ENCODE measurements at regions of chr3 and their contacts with region 1.

Region 1: DNA sequence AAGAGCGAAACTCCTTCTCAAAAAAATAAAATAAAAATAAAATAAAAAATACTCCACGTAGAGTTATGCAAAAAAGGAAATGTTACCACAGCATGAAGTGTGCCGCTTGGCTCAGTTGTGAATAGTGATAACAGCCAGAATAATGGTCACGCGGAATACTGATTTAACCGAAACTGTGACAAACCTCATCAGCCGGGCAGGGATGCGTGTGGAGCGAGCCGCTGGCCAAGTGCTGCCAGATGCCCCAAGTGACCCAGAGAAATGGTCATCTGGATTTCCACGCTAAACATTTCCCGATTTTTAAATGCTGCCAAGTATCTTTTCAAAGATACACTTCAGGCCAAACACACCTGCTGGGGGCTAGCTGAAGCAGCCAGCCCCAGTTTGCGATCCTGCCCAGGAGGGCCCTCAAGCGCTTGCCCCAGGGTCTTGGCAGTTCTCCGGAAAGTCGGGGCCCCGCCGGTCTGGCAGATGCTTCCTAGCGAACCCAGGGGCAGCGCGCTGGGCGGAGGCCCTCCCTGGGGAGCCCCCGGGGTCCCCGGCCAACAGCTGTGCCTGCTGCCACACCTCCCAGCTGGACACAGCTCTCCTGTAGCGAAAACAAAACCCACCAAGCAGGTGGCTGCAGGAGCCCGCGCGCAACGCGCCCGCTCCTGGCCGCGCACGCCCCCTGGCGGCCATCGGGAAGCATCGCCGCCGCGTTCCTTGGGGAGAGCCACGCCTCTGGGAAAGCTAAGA is 35.1 kb downstream of the CMTM6 start:
- DNase-seq: peak in 1 of 2 donors; percentile 38
- ATAC-seq: peak; percentile 88
- H3K4me3 ChIP-seq: peak overlapping the region; percentile 49 to 65 (median 56)
- H3K27ac ChIP-seq: peak overlapping the region in 1 of 4 donors; percentile 15
- H3K4me1 ChIP-seq: peaks cover 0 to 9% of the 10 kb centered on the region in 2 donors
- H3K27me3 ChIP-seq: no peaks in the 10 kb centered on the region
- CTCF ChIP-seq: peak; percentile 91 to 100 (median 96)
- POLR2A ChIP-seq: no peak

Region 2: DNA sequence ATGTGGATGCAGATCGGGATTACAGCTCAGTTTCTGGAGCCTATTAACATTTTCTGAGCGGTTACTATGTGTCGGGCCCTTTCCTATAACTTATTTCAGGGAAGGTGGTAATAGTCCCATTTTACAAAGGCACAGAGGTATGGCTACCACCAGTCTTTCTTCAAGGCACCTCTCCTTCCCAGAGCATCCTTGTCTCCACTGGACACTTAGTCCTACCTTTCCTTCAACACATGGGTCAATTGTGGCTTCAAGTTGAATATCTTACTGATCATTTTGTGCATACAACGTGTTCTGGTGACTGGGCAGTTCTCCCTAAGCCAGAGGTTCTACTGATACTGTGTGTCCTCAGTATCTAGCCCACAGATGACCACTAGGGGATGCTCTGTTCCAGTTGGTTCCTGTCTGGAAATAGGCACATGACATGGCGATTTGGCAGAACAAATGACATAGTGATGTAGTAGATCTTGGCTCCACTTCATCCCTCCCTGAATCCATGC is 289.8 kb before region 1 on chr3:
- in situ Hi-C with region 1: no loop called
- intact Hi-C with region 1: loop called (anchors 10 kb)
- DNase-seq: peak; percentile 18 to 31
- ATAC-seq: peak; percentile 69 to 75
- H3K4me3 ChIP-seq: no peak overlapping the region
- H3K27ac ChIP-seq: no peak overlapping the region
- H3K4me1 ChIP-seq: no peaks in the 10 kb centered on the region
- H3K27me3 ChIP-seq: no peaks in the 10 kb centered on the region
- CTCF ChIP-seq: peak; percentile 54 to 66 (median 61)
- POLR2A ChIP-seq: no peak

Region 3: DNA sequence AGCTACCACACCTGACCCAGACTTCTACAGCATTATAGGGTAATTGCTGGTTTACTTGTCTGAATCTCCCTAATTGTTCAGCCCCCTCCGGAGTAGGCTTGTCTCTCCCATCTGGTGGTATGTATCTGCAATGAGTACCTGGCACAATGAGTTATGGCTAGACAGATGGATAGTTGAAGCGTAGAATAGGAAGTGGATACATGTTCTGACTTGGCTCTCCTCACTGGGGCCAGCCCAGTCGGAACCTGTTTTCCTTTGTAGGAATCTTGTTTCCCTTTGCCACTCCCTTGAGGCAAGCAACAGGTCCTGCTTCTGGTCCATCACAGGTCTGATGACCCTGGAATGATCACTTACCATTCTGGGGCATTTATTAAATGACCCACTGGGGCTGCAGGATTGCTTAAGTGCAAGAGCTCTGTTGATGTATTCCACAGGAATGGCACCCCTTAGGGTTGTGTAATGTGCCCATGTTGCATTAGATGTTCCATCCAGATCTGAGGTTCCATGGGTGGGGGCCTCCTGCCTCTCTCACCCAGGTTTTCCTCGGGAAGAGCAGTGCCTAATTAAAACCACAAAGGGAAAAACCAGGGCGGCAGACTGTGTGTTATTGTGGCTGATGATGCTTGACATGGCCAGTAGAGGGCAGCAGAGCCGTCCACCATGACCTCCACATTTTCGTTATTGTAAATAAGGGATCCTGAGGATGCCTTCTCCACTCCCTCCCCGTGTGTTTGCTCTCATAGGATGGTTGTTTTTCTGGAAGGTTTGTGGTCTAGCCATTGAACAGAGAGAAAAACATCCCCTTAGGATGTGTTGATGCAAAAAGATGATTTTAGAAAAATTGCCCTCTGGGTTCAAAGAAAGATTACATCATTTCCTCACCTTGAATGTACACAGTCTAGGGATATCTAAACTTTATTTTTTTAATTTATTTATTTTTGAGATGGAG is 171.0 kb before region 1 on chr3:
- in situ Hi-C with region 1: loop called (anchors 10 kb)
- intact Hi-C with region 1: loop called (anchors 5 kb)
- DNase-seq: peak; percentile 19 to 28
- ATAC-seq: peak; percentile 51 to 63
- H3K4me3 ChIP-seq: no peak overlapping the region
- H3K27ac ChIP-seq: no peak overlapping the region
- H3K4me1 ChIP-seq: no peaks in the 10 kb centered on the region
- H3K27me3 ChIP-seq: no peaks in the 10 kb centered on the region
- CTCF ChIP-seq: peak; percentile 61 to 90 (median 75)
- POLR2A ChIP-seq: no peak

Region 4: DNA sequence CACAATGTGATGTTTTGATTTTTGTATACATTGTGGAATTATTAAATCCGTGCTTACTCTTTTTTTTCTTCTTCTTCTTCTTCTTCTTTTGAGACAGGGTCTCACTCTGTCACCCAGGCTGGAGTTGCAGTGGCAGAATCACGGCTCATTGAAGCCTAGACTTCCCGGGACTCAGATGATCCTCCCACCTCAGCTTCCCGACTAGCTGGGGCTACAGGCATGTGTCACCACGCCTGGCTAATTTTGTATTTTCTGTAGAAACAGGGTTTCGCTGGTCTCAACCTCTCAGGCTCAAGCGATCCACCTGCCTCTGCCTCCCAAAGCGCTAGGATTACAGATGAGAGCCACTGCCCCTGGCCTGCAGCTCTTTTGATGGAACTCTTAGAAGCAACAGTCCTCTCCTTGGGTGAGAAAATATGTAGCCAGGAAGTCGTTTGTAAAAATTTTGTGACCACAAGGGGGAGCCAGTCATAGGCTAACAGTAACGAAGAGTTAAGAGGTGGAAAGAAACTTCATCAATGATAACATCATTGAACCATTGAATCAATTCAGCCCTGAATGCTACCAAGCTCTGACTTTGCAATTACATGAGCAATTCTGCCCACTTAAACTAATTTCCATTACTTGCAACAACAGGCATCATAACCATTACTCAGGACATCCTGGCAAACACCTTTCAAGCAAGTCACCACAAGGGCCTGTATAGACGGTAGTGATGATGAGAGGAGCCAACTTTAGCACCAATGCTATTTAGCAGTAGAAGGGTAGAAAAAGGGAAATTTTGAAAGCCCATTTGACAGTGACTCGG is 92.5 kb before region 1 on chr3:
- in situ Hi-C with region 1: loop called (anchors 5 to 10 kb)
- intact Hi-C with region 1: loop called (anchors 1 kb)
- DNase-seq: peak; percentile 6 to 18
- ATAC-seq: peak; percentile 36 to 49
- H3K4me3 ChIP-seq: no peak overlapping the region
- H3K27ac ChIP-seq: no peak overlapping the region
- H3K4me1 ChIP-seq: no peaks in the 10 kb centered on the region
- H3K27me3 ChIP-seq: no peaks in the 10 kb centered on the region
- CTCF ChIP-seq: peak; percentile 22 to 66 (median 62)
- POLR2A ChIP-seq: no peak

Region 5: DNA sequence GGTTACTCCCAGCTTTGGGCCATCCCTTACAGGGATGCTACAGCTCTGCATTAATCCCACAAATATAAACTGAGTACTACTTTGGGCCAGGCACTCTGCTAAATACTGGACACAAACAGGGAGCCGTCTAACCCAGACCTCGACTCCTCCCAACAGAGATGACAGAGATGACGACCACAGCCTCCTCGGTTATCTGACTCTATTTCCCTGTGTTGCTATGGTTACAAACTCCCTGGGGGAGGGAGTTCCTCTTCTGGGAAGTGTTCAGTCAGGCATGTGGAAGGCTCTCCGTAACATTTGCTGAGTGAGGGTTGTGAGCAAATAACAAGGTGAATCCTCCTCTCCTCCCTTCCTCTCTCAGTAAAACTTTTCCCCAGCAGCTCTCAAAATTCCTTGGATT is 82.6 kb before region 1 on chr3:
- in situ Hi-C with region 1: loop called in 1 of 4 experiments (anchors 10 kb)
- intact Hi-C with region 1: no loop called
- DNase-seq: no peak
- ATAC-seq: no peak
- H3K4me3 ChIP-seq: no peak overlapping the region
- H3K27ac ChIP-seq: no peak overlapping the region
- H3K4me1 ChIP-seq: no peaks in the 10 kb centered on the region
- H3K27me3 ChIP-seq: no peaks in the 10 kb centered on the region
- CTCF ChIP-seq: no peak
- POLR2A ChIP-seq: no peak

Region 6: GRCh38 chr3:32401556-32402081 is 65.9 kb before region 1 on chr3:
- in situ Hi-C with region 1: no loop called
- intact Hi-C with region 1: loop called (anchors 5 kb)
- DNase-seq: peak; percentile 50 to 66
- ATAC-seq: peak; percentile 75 to 89
- H3K4me3 ChIP-seq: peak overlapping the region; percentile 44 to 73 (median 61)
- H3K27ac ChIP-seq: peak overlapping the region; percentile 56 to 85 (median 76)
- H3K4me1 ChIP-seq: peaks cover 8% of the 10 kb centered on the region in 2 donors
- H3K27me3 ChIP-seq: no peaks in the 10 kb centered on the region
- CTCF ChIP-seq: peak in 1 of 5 experiments; percentile 15
- POLR2A ChIP-seq: peak in 1 of 2 donors; percentile 16

Region 7: GRCh38 chr3:32510075-32510724 is 42.7 kb after region 1 on chr3:
- in situ Hi-C with region 1: no loop called
- intact Hi-C with region 1: no loop called
- DNase-seq: peak; percentile 27 to 57
- ATAC-seq: peak; percentile 80 to 85
- H3K4me3 ChIP-seq: no peak overlapping the region
- H3K27ac ChIP-seq: no peak overlapping the region
- H3K4me1 ChIP-seq: no peaks in the 10 kb centered on the region
- H3K27me3 ChIP-seq: no peaks in the 10 kb centered on the region
- CTCF ChIP-seq: peak; percentile 62 to 71 (median 66)
- POLR2A ChIP-seq: no peak

Measured in gastrocnemius medialis (tissue), 4 donors.